ENCODE measurements at regions of chr11 and their contacts with region 1.

Region 1: DNA sequence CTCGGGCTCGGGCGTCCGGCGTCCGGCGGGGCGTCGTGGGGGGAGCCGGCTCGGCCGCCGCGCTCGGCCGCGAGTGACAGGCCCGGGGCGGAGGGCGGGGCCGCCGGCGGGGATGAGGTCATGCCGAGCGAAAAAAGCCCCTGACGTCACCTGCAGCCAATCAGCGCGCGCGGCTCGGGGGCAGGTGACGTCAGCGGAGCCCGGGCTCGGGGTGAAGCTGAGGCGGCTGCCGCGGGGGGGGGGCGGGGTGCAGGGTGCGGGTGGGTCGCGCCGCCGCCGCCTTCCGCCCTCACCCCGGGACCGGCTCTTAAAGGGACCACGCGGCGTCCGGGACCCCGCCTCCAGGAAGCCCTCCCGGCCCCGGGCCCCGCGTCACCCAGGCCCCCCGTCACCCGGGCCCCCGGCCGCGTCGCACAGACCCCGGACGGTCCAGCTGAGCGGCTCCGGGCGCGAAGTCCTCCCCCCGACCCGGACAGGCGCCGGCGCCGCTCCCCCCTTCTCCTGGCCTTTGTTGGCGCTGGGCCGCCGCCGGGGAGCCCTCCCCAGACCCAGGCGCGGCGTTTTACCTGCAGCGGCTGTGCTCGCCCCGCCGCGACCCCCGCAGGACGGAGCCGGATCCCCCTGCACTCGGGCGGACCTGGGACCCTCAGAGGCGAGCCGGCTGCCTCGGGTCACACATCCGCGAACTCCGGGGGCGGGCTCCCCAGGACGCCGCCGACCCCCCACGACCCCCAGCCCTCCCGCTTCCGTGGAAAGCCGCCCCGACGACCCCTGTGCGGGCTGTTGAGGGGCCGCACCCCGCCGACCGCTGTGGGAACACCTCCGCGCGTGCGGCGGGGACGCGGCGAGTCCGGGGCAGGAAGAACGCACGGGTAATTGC is at the start of gene DUSP8:
- DNase-seq: peak; percentile 96
- H3K27ac ChIP-seq: no peak within 1 kb of the TSS
- CTCF ChIP-seq: no peak

Region 2: DNA sequence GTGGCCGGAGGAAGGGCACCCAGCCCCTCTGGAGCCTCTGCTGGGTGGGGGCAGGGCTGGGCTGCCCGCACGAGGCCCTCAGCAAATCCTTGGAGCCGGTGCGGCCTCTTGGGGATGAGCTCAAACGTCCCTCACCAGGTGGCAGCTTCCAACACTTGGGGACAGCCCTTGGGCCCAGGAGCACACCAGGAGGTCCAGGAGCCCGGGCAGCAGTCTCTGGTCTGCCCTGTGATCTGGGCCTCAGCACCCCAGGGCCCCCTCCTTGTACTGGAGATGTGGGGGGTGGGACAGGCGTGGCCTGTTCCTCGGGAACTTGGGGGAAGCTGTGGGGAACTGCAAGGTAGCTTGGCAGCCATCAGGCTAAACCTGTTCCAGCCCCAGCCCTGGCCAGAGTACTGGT is 125.8 kb before region 1 on chr11:
- CTCF ChIA-PET with region 1: no interaction called
- POLR2A ChIA-PET with region 1: no interaction called
- DNase-seq: no peak
- H3K27ac ChIP-seq: peak overlapping the region; percentile 49; the same call in 1 of the 2 replicates
- CTCF ChIP-seq: no peak

Region 3: DNA sequence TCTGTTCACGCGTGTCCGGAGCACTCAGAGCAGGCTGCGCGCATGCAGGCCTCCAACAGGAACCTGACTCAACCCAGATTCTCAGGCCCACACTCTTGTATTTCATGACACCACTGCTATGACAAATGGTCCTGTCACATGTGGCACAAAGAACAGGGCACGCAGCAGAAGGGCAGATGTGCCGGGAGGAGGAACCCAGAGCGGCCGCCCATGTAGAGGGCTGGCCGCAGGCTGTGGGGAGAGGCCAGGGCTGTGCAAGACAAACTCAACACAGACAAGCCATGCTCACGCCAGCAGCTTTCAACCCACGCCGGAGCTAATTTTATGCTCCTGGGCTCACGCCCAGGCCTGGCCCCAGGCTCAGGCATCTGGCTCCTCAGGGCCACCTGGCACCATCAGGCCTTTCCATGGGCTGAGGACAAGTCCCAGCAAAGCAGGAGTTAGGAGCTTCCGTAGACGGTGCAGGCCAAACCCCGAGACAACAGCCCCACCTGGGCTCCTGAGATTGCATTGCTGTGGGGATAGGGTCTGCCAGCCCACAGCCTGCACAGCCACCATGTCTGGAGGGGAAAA is 40.3 kb before region 1 on chr11:
- CTCF ChIA-PET with region 1: interaction called, 10 read pairs
- POLR2A ChIA-PET with region 1: no interaction called
- DNase-seq: peak; percentile 63
- H3K27ac ChIP-seq: peak overlapping the region; percentile 99
- CTCF ChIP-seq: peak; percentile 50

Region 4: GRCh38 chr11:1546536-1547400 is 25.7 kb before region 1 on chr11:
- CTCF ChIA-PET with region 1: interaction called, 78 read pairs
- POLR2A ChIA-PET with region 1: no interaction called
- DNase-seq: peak; percentile 77
- H3K27ac ChIP-seq: no peak overlapping the region
- CTCF ChIP-seq: peak; percentile 83

Region 5: DNA sequence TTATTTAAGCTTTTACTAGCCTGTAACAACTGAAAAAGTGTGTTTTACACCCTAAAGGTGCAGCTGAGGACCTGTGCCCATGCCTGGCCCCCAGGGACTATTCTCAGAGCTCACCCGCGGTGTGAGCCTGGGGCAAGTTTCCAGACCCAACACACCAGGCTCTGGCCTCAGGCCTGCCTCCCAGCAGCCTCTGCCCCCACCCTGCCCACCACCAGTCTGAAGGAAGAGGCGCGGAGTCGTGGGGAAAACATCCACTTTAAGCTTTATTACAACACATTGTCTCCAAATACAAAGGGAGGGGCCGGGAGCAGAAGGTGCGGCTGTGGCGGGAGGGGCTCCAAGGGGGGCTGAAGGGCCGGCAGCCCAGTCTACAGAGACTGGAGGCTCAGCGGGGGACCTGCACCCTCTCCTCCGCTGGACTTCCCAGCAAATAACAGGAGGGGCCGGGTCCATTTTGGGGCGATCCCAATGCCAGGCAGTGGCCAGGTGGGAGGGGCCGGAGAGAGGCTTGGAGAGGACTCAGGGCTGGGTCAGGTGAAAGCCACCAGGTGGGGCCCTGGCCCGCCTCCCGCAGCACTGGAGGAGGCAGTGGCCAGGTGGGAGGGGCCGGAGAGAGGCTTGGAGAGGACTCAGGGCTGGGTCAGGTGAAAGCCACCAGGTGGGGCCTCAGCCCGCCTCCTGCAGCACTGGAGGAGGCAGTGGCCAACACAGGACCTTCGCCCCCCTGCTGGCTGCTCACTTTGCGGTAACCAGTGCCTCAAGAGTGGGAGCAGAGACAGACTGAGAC is 18.4 kb before region 1 on chr11:
- CTCF ChIA-PET with region 1: interaction called, 78 read pairs
- POLR2A ChIA-PET with region 1: interaction called, 3 read pairs
- DNase-seq: no peak
- H3K27ac ChIP-seq: peak overlapping the region; percentile 32; the same call in 1 of the 2 replicates
- CTCF ChIP-seq: no peak

Region 6: DNA sequence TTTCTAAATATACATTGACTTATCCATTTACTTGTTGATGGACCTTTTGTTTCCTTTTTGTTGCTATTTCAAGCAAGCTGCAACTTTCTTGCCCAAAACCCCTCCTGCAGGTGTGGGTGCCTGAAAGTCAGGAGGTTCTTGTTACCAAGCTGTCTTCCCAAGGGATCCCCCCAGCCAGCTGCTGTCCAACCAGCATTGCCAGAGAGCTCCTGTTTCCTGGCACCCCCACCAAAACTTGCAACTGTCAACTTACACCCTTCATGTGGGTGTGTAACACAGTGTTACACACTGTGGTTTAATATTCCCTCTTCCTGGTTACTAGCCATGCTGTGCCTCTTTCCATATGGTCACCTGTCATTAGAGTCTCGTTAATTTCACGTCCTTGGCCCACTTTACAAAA is 14.3 kb after region 1 on chr11:
- CTCF ChIA-PET with region 1: interaction called, 12 read pairs
- POLR2A ChIA-PET with region 1: no interaction called
- DNase-seq: no peak
- H3K27ac ChIP-seq: no peak overlapping the region
- CTCF ChIP-seq: no peak

Region 7: DNA sequence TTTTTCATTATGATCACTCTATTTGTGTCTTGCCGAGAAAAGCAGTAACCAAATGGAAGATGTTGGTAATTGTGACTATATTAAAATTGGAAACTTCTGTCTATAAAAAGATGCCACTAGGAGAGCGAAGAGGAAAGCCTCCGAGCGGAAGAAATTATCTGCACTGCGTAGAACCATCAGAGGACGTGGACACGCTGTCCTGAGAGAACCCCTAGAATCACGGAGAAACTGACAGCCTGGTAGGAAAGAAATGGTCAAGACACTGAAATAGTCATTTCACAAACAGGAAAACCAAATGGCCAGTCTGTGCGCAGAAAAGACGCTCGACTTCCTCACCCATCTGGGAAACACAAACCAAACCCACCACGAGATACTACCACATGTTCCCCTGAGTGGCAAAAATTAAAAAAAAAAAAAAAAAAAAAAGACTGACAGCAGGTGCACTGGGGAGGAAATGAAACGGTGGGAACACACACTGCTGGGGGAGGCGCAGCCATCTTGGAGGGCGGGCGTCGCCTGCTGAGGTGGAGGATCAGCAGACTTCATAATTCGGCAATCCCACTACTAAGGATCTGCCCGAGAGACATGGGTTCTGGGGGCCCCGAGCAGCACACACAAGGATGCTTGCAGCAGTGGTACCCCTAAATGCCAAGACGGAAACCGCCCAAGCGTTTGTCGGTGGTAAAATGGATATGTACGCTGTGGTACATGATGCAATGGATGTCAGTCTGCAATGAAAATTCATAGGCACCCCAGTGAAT is 156.7 kb after region 1 on chr11:
- CTCF ChIA-PET with region 1: no interaction called
- POLR2A ChIA-PET with region 1: no interaction called
- DNase-seq: no peak
- H3K27ac ChIP-seq: no peak overlapping the region
- CTCF ChIP-seq: no peak

Region 8: GRCh38 chr11:2002807-2003206 is 430.4 kb after region 1 on chr11:
- CTCF ChIA-PET with region 1: no interaction called
- POLR2A ChIA-PET with region 1: no interaction called
- DNase-seq: no peak
- H3K27ac ChIP-seq: no peak overlapping the region
- CTCF ChIP-seq: no peak

Measured in RWPE1 (cell line).